ENCODE measurements at regions of chr2 and their contacts with region 1.

Region 1: GRCh38 chr2:201860636-201861066 is 54.3 kb downstream of the CDK15 start:
- DNase-seq: peak; percentile 65 to 71
- ATAC-seq: peak; percentile 97 to 98
- H3K4me3 ChIP-seq: no peak overlapping the region
- H3K27ac ChIP-seq: no peak overlapping the region
- H3K4me1 ChIP-seq: no peaks in the 10 kb centered on the region
- CTCF ChIP-seq: peak; percentile 91
- EP300 ChIP-seq: no peak
- POLR2A ChIP-seq: no peak
- RAD21 ChIP-seq: peak; percentile 92 to 94

Region 2: DNA sequence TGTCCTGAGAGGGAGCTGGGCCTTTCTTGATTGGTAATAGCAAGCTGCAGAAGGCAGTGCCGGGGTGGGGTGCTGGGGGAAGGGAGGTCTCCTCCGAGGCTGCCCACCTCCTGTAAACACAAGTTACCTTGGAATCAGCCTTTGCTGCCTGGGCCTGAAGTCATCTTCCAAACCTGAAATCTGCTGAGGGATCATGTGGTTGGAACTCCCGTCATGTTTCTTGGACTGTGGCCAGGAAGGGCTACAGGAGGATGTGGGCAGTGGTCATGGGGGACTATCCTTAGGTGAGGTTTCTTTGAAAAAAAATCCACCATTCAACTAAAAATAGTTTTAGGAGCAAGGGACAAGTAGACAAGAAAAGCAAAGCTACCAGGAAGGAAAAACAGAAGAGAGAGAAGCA is 19.9 kb after region 1 on chr2:
- CTCF ChIA-PET with region 1: interaction called, 28 read pairs
- POLR2A ChIA-PET with region 1: no interaction called
- DNase-seq: no peak
- ATAC-seq: no peak
- H3K4me3 ChIP-seq: no peak overlapping the region
- H3K27ac ChIP-seq: no peak overlapping the region
- H3K4me1 ChIP-seq: no peaks in the 10 kb centered on the region
- CTCF ChIP-seq: no peak
- EP300 ChIP-seq: no peak
- POLR2A ChIP-seq: no peak
- RAD21 ChIP-seq: no peak

Region 3: DNA sequence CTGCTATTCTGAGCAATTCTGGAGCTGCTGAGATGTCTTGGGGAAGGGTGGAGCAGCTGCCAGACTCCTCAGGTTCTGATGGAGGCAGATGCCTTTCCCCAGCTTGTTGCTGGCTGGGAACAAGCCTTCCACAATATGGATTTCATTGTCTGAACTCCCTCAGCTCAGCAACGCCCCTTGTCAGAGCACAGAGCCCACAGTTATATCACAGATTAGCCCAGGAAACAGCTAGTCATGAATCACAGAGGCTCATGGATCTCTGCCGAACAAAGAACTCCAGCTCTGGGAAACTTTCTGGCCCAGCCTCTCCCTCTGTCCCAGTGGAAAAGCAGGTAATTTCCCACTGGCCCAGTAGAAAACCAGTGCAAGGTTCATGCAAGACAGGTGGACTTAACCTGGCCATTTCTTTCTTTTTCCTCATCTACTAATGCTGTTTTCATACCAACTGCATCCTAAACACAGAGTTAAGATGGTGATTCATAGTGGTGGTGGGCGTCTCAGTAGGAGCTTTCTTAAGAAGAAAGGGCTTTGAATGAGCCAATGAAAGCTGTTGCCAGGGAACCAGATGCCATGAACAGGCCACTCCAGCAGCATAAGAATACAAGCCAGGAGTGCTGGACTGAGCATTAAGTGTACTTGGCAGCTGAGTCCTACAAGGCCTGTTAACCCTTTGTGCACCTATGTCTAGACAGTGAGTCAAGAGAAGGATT is 203.7 kb after region 1 on chr2:
- CTCF ChIA-PET with region 1: interaction called, 20 read pairs
- POLR2A ChIA-PET with region 1: no interaction called
- DNase-seq: peak in 1 of 2 experiments; percentile 17
- ATAC-seq: peak; percentile 70 to 71; a peak in 5 of 6 replicates
- H3K4me3 ChIP-seq: no peak overlapping the region
- H3K27ac ChIP-seq: no peak overlapping the region
- H3K4me1 ChIP-seq: no peaks in the 10 kb centered on the region
- CTCF ChIP-seq: no peak
- EP300 ChIP-seq: no peak
- POLR2A ChIP-seq: no peak
- RAD21 ChIP-seq: no peak

Region 4: DNA sequence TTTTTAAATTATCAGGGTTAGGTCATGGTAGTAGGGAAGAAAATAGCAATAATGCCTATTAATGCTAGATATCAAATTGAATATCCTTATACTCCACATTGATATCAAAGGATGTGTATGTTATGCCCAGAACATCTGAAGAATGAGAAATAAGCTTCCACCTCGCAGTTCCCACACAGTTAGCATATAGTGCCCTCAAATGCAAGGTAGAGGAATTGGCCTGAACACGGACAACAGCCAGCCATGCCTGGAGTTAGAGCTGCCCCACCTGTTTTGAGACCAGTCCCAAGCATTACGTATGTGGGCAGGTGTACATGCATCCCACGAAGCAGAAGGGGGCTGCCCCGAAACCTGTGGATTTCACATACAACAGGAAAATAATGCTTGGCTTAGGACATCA is 298.1 kb after region 1 on chr2:
- CTCF ChIA-PET with region 1: interaction called, 29 read pairs
- POLR2A ChIA-PET with region 1: no interaction called
- DNase-seq: peak in 1 of 2 experiments; percentile 39
- ATAC-seq: peak; percentile 86 to 88
- H3K4me3 ChIP-seq: no peak overlapping the region
- H3K27ac ChIP-seq: no peak overlapping the region
- H3K4me1 ChIP-seq: no peaks in the 10 kb centered on the region
- CTCF ChIP-seq: peak; percentile 49
- EP300 ChIP-seq: no peak
- POLR2A ChIP-seq: no peak
- RAD21 ChIP-seq: peak; percentile 67 to 72

Region 5: GRCh38 chr2:202178342-202178958 is 317.8 kb after region 1 on chr2:
- CTCF ChIA-PET with region 1: interaction called, 75 read pairs
- POLR2A ChIA-PET with region 1: no interaction called
- DNase-seq: peak; percentile 51 to 67
- ATAC-seq: peak; percentile 92 to 99
- H3K4me3 ChIP-seq: no peak overlapping the region
- H3K27ac ChIP-seq: no peak overlapping the region
- H3K4me1 ChIP-seq: no peaks in the 10 kb centered on the region
- CTCF ChIP-seq: peak; percentile 94
- EP300 ChIP-seq: no peak
- POLR2A ChIP-seq: no peak
- RAD21 ChIP-seq: peak; percentile 93 to 96

Measured in A549 (cell line).